ENCODE measurements at regions of chr10 and their contacts with region 1.

Region 1: DNA sequence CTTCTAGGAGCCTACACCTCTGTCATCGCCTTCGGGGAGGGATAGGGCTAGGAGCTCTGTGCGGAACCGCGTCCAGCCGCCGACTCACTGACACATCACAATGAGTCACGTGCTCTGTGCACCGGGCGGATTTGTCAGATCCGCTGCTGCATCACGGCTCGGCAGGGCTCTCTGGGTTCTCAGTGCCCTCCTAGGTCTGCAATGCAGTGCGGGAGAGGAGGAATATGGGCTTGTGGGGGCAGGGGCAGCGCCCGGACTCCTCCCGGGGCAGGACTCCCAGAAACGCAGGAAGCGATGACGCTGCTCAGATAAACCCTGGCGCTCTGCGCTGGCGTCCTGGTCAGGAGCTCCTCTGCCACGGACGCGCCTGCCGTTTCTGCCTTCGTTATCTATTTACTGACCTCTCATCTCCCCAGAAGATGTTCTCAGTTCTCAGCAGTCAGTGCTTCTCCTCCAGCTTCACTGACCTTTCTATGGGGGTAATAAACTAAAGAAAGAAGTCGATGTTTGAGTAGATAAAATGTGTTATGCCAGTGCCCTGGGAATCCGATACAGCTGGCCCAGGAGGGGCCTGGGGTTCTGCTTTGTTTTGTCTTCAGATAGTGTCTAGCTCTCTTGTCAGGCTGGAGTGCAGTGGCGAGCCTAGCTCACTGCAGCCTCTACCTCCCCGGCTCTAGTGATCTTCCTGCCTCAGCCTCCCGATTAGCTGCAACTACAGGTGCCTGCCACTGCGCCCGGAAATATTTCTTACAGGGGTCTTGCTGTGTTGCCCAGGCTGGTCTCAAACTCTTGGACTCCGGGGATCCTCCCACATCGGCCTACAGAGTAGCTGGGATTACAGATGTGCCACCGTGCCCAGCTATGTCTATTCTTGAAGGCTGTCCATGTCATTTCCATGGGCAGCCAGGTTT is 22.8 kb upstream of the ITGB1 start:
- DNase-seq: peak; percentile 72 to 100
- ATAC-seq: peak; percentile 87 to 91
- H3K4me3 ChIP-seq: peak overlapping the region; percentile 40
- H3K27ac ChIP-seq: peak overlapping the region; percentile 96 to 99
- H3K4me1 ChIP-seq: peaks cover 70% of the 10 kb centered on the region
- CTCF ChIP-seq: no peak
- EP300 ChIP-seq: peak; percentile 83 to 93; a peak in 3 of 5 replicates
- POLR2A ChIP-seq: peak; percentile 62
- RAD21 ChIP-seq: peak; percentile 39 to 57; a peak in 3 of 5 replicates

Region 2: DNA sequence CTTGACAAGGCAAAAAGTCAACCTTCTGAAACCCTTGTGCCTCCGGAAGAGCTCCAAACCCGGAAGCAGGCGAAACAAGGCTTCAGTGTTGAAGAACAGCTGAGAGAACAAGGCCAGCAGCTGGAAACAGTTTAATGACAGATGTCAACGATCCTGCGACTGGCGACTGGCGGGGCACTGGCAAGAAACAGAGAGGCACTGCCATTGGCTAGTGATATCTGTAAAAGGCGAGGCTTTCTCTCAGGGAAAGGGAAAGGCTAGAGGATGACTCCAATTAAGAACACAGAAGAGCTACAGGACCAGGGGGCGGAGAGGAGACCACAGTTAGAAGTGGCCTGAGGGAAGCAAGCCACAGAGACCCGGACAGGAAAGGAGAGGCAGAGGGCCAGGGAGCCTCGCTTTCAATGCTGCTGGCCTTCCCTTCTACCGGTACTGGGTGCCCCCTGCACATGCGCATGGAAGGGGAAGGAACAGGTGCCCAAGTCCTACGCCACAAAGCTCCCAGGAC is 42.2 kb before region 1 on chr10:
- CTCF ChIA-PET with region 1: interaction called, 4 read pairs
- POLR2A ChIA-PET with region 1: interaction called, 11 read pairs
- DNase-seq: peak in 1 of 2 experiments; percentile 58
- ATAC-seq: peak; percentile 21 to 48
- H3K4me3 ChIP-seq: peak overlapping the region; percentile 10; the same call in 1 of the 3 replicates
- H3K27ac ChIP-seq: peak overlapping the region; percentile 37 to 61; a peak in 5 of 6 replicates
- H3K4me1 ChIP-seq: peaks cover 100% of the 10 kb centered on the region
- CTCF ChIP-seq: no peak
- EP300 ChIP-seq: no peak
- POLR2A ChIP-seq: no peak
- RAD21 ChIP-seq: no peak

Region 3: DNA sequence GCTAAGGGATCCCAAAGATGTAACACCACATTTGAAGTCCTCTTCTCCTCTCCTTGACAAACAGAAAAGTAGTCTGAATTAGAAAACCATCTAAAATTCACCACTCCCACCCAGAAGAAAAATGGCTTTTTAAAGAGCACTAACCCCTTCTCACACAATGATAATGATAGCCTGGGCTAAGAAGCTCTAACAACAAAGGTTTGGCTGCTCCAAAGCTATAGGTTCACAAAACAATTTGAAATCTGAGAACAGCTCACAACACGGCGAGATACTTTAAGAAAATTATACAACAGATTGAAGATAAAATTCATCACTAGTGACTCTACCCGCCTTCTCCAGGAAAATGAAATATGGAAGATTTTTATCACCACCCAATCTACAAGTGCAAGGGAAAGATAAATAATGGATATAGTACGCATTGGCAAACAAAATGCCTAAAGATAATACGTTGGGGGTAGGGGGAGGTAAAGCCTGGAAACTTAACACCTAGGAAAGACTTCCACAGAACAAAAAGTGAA is 30.2 kb before region 1 on chr10:
- CTCF ChIA-PET with region 1: interaction called, 15 read pairs
- POLR2A ChIA-PET with region 1: interaction called, 103 read pairs
- DNase-seq: no peak
- ATAC-seq: no peak
- H3K4me3 ChIP-seq: peak overlapping the region; percentile 74
- H3K27ac ChIP-seq: peak overlapping the region; percentile 90 to 100
- H3K4me1 ChIP-seq: peaks cover 82% of the 10 kb centered on the region
- CTCF ChIP-seq: no peak
- EP300 ChIP-seq: no peak
- POLR2A ChIP-seq: no peak
- RAD21 ChIP-seq: no peak

Region 4: DNA sequence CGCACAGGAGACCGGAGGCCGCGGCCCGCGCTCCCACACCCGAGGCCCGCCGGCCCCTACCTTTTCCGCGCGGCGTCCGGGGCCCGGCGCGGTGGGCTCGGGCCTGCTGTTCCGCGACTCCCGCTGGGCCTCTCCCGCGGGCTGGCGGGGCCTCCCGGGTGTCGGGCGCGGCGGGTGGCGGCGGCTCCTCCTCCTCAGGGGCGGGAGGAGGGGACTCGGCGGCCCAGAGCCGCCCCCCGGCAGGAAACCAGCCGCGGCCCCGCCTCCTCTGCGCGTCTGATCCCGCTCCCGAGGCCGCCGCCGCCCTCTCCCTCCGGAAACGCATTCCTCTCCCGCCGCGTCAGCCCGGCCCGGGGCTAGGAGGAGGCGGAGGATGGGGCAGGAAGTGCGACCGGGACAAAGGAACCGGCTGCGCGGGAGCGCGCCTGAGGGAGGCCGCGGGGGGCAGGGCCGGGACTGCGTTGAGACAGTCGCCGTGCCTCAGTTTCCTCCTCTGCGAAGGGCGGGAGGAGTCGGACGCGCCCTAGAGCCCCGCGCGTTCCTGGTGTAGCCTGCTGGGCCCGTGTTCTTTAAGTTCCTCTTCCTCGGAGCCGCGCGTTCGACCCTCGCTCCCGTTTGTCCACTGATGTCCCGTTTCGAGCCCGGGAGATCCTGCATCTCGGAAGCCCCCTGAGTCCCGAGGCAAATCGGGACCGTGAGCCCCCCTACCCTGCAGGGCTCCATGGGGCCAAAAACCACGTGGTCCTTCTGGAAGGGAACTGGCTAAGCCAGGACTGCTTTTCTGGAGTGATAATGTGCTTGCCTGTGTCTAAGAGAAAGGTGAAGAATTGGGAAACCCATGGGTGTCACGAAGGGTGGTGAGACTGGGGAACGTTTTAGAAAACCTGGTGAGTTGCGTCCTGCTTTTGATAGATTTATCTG is 22.5 kb before region 1 on chr10 and contains the start of gene ITGB1:
- CTCF ChIA-PET with region 1: interaction called, 15 read pairs
- POLR2A ChIA-PET with region 1: interaction called, 103 read pairs
- DNase-seq: peak; percentile 57 to 95
- ATAC-seq: peak; percentile 78 to 81
- H3K4me3 ChIP-seq: peak within 1 kb of the TSS; percentile 74
- H3K27ac ChIP-seq: peak within 1 kb of the TSS; percentile 99 to 100
- H3K4me1 ChIP-seq: peaks cover 42% of the 10 kb centered on the region
- CTCF ChIP-seq: no peak
- EP300 ChIP-seq: peak; percentile 57 to 77; a peak in 3 of 5 replicates
- POLR2A ChIP-seq: peak; percentile 61
- RAD21 ChIP-seq: peak; percentile 8 to 21; a peak in 2 of 5 replicates
- polyA plus RNA-seq, gene ITGB1: 1,667 and 2,408 TPM in 2 replicates

Region 5: DNA sequence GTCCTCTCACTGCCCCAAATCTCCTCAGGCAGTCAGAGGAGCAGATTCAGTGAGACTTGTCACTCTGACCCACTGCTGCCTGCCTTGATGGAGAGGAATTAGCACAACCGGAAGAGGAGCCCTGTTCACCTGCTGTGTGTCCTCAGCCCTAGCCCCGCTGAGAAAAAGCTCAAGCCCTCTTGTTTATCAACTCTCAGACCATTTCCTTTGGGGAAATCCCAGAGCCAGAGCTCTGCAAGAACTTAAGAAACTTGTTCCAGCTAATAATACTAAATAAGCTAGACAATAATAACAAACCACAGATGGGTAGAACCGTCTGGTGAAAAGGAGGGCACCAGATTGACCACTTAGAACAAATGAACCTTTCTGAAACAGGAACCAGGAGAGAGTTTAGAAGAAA is 14.9 kb after region 1 on chr10:
- CTCF ChIA-PET with region 1: interaction called, 6 read pairs
- POLR2A ChIA-PET with region 1: interaction called, 10 read pairs
- DNase-seq: no peak
- ATAC-seq: peak in 1 of 2 experiments; percentile 23; a peak in 4 of 6 replicates
- H3K4me3 ChIP-seq: no peak overlapping the region
- H3K27ac ChIP-seq: peak overlapping the region; percentile 84 to 99
- H3K4me1 ChIP-seq: peaks cover 53% of the 10 kb centered on the region
- CTCF ChIP-seq: no peak
- EP300 ChIP-seq: no peak
- POLR2A ChIP-seq: no peak
- RAD21 ChIP-seq: no peak

Region 6: GRCh38 chr10:33001908-33002492 is 21.2 kb after region 1 on chr10:
- CTCF ChIA-PET with region 1: interaction called, 168 read pairs
- POLR2A ChIA-PET with region 1: interaction called, 163 read pairs
- DNase-seq: peak in 1 of 2 experiments; percentile 77
- ATAC-seq: no peak
- H3K4me3 ChIP-seq: no peak overlapping the region
- H3K27ac ChIP-seq: peak overlapping the region; percentile 98 to 99
- H3K4me1 ChIP-seq: peaks cover 80% of the 10 kb centered on the region
- CTCF ChIP-seq: no peak
- EP300 ChIP-seq: no peak
- POLR2A ChIP-seq: no peak
- RAD21 ChIP-seq: no peak

Measured in A549 (cell line).